Calu3 (cell line): ENCODE measurements at regions of chr4 and their contacts with region 1.

Region 1: GRCh38 chr4:173669460-173670179 is 139.6 kb upstream of the HAND2 start:
- DNase-seq: no peak
- H3K4me3 Mint-ChIP-seq: no peak overlapping the region
- H3K27ac Mint-ChIP-seq: no peak overlapping the region
- H3K4me1 Mint-ChIP-seq: no peaks in the 10 kb centered on the region
- H3K27me3 Mint-ChIP-seq: no peaks in the 10 kb centered on the region
- CTCF ChIP-seq: no peak

Region 2: GRCh38 chr4:173647902-173648301 is 21.7 kb before region 1 on chr4:
- CTCF ChIA-PET with region 1: no interaction called
- intact Hi-C with region 1: loop called (anchors 2 kb)
- DNase-seq: no peak
- H3K4me3 Mint-ChIP-seq: no peak overlapping the region
- H3K27ac Mint-ChIP-seq: no peak overlapping the region
- H3K4me1 Mint-ChIP-seq: no peaks in the 10 kb centered on the region
- H3K27me3 Mint-ChIP-seq: no peaks in the 10 kb centered on the region
- CTCF ChIP-seq: no peak